Activated CD4-positive, alpha-beta T cell treated with anti-CD3 and anti-CD28 coated beads for 36 hours (primary cell): ENCODE measurements at regions of chr3 and their contacts with region 1.

Region 1: GRCh38 chr3:184983-185382 is 11.6 kb upstream of the CHL1 start:
- DNase-seq: no peak
- ATAC-seq: no peak
- H3K4me3 Mint-ChIP-seq: no peak overlapping the region
- H3K27ac Mint-ChIP-seq: no peak overlapping the region
- H3K4me1 Mint-ChIP-seq: no peaks in the 10 kb centered on the region
- H3K27me3 Mint-ChIP-seq: no peaks in the 10 kb centered on the region

Region 2: GRCh38 chr3:197828-198491 is 13.0 kb after region 1 on chr3:
- CTCF ChIA-PET with region 1: interaction called, 3 read pairs
- POLR2A ChIA-PET with region 1: no interaction called
- intact Hi-C with region 1: loop called (anchors 1 kb)
- DNase-seq: no peak
- ATAC-seq: no peak
- H3K4me3 Mint-ChIP-seq: no peak overlapping the region
- H3K27ac Mint-ChIP-seq: no peak overlapping the region
- H3K4me1 Mint-ChIP-seq: peaks cover 5% of the 10 kb centered on the region
- H3K27me3 Mint-ChIP-seq: peaks cover 25% of the 10 kb centered on the region

Region 3: DNA sequence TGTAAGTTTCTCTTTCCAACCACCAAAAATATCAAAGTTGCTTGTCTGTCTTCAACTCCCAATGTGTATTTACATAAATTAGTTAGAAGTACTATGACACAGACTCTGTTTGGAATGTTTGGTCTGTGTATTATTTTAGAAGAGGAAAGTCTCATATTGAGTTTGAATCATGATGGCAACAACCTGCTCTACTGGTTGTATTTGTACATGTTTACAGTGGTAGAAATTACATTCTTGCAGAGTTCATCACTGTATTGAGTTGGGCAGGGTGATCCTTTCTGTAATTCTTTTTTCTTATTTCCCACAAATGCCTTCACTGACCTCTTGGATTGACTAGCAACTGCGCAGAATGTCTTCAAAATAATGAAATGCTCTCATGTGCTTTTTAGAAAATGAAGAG is 161.2 kb after region 1 on chr3:
- CTCF ChIA-PET with region 1: no interaction called
- POLR2A ChIA-PET with region 1: no interaction called
- intact Hi-C with region 1: no loop called
- DNase-seq: no peak
- ATAC-seq: no peak
- H3K4me3 Mint-ChIP-seq: no peak overlapping the region
- H3K27ac Mint-ChIP-seq: no peak overlapping the region
- H3K4me1 Mint-ChIP-seq: no peaks in the 10 kb centered on the region
- H3K27me3 Mint-ChIP-seq: no peaks in the 10 kb centered on the region

Region 4: GRCh38 chr3:502486-502885 is 317.5 kb after region 1 on chr3:
- CTCF ChIA-PET with region 1: no interaction called
- POLR2A ChIA-PET with region 1: no interaction called
- intact Hi-C with region 1: no loop called
- DNase-seq: no peak
- ATAC-seq: no peak
- H3K4me3 Mint-ChIP-seq: no peak overlapping the region
- H3K27ac Mint-ChIP-seq: no peak overlapping the region
- H3K4me1 Mint-ChIP-seq: no peaks in the 10 kb centered on the region
- H3K27me3 Mint-ChIP-seq: no peaks in the 10 kb centered on the region